ENCODE measurements at regions of chr19 and their contacts with region 1.

Region 1: GRCh38 chr19:12639901-12640613 is 26.5 kb downstream of the MAN2B1 start:
- DNase-seq: peak; percentile 92
- H3K4me3 ChIP-seq: peak overlapping the region in 1 of 2 experiments; percentile 46; a peak in 2 of 4 replicates
- H3K27ac ChIP-seq: no peak overlapping the region
- H3K4me1 ChIP-seq: peaks cover 0 to 5% of the 10 kb centered on the region in 2 experiments; a peak in 1 of 4 replicates
- H3K27me3 ChIP-seq: no peaks in the 10 kb centered on the region
- CTCF ChIP-seq: peak; percentile 71
- EP300 ChIP-seq: no peak
- RAD21 ChIP-seq: peak; percentile 51

Region 2: GRCh38 chr19:12628040-12629022 is 11.7 kb before region 1 on chr19:
- CTCF ChIA-PET with region 1: interaction called, 11 read pairs
- POLR2A ChIA-PET with region 1: no interaction called
- DNase-seq: no peak
- H3K4me3 ChIP-seq: no peak overlapping the region
- H3K27ac ChIP-seq: no peak overlapping the region
- H3K4me1 ChIP-seq: no peaks in the 10 kb centered on the region
- H3K27me3 ChIP-seq: no peaks in the 10 kb centered on the region
- CTCF ChIP-seq: no peak
- EP300 ChIP-seq: no peak
- RAD21 ChIP-seq: no peak

Region 3: DNA sequence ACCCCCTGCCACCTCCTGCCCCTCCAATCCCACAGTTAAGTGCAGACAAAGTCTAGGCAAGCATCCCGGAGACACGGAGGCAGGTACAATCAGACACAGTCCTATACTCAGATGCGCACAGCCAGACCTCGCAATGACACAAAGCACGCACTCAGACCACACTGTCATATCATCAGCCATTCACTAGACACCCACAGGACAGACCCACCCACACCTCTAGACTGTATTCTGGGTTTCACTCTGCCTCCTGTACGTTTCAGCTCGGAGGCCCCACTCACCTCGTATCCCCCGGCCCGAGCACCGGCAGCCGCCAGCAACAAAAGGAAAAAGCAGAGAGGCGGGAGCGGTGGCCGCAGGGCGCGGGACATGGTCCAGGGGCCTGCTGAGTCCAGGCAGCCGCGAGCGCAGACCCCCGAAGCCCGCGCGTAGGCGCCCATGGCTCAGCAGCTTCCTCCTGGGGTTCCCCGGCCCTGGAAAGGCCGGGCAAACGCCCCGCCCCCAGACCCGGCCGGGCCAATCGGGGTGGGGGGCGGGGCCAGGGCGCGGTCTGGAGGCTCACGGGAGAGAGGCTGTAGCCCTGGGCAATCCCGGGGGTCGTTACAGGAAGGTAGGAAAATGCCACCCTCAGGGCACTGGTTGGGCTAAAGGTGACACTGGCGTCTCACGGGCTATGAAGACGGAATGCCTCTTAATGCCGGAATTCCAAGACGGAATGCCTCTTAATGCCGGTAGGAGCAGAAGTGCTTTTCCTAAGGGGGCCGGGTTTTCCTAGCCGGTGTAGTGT is 26.4 kb after region 1 on chr19 and contains the starts of genes MAN2B1 and WDR83:
- CTCF ChIA-PET with region 1: interaction called, 15 read pairs
- POLR2A ChIA-PET with region 1: no interaction called
- DNase-seq: peak; percentile 98
- H3K4me3 ChIP-seq: peak within 1 kb of the TSS; percentile 71 to 94
- H3K27ac ChIP-seq: peak within 1 kb of the TSS; percentile 8 to 60; a peak in 1 of 4 replicates
- H3K4me1 ChIP-seq: peaks cover 5 to 35% of the 10 kb centered on the region in 2 experiments; a peak in 2 of 4 replicates
- H3K27me3 ChIP-seq: no peaks in the 10 kb centered on the region
- CTCF ChIP-seq: no peak
- EP300 ChIP-seq: no peak
- RAD21 ChIP-seq: no peak
- polyA plus RNA-seq, gene MAN2B1: 43.2 and 47.0 TPM in 2 replicates
- polyA plus RNA-seq, gene WDR83: 12.8 and 18.2 TPM in 2 replicates

Region 4: GRCh38 chr19:12672744-12673143 is 32.7 kb after region 1 on chr19:
- CTCF ChIA-PET with region 1: interaction called, 15 read pairs
- POLR2A ChIA-PET with region 1: no interaction called
- DNase-seq: no peak
- H3K4me3 ChIP-seq: no peak overlapping the region
- H3K27ac ChIP-seq: no peak overlapping the region
- H3K4me1 ChIP-seq: peaks cover 5 to 18% of the 10 kb centered on the region in 2 experiments; a peak in 2 of 4 replicates
- H3K27me3 ChIP-seq: no peaks in the 10 kb centered on the region
- CTCF ChIP-seq: no peak
- EP300 ChIP-seq: no peak
- RAD21 ChIP-seq: no peak

Measured in SK-N-SH (cell line).